ENCODE measurements at regions of chr1 and their contacts with region 1.

Region 1: GRCh38 chr1:181166377-181167196 is 78.1 kb downstream of the IER5 start:
- DNase-seq: peak; percentile 84
- H3K4me3 Mint-ChIP-seq: no peak overlapping the region
- H3K27ac Mint-ChIP-seq: peak overlapping the region; percentile 21
- H3K4me1 Mint-ChIP-seq: peaks cover 7% of the 10 kb centered on the region
- H3K27me3 Mint-ChIP-seq: peaks cover 51% of the 10 kb centered on the region

Region 2: DNA sequence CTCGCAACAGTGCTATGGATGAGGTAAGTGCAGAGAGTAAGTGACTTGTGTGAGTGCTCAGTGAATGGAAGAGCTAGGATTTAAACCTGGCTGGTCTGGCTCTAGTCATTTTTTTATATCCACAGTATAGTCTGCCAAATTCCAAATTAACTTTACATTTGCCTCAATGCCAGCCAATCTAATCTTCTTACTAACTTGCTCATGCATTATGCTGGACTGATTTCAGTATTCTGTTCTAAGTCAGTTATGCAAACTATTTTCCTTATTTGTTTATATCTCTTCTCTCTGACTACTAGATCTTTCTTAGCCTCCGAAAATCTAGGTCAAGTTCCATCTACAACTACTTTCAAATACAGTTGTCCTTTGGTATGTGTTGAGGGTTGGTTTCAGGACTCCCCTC is 401.4 kb before region 1 on chr1:
- CTCF ChIA-PET with region 1: no interaction called
- DNase-seq: no peak
- H3K4me3 Mint-ChIP-seq: no peak overlapping the region
- H3K27ac Mint-ChIP-seq: no peak overlapping the region
- H3K4me1 Mint-ChIP-seq: peaks cover 3% of the 10 kb centered on the region
- H3K27me3 Mint-ChIP-seq: no peaks in the 10 kb centered on the region

Region 3: GRCh38 chr1:180881806-180882509 is 284.6 kb before region 1 on chr1:
- CTCF ChIA-PET with region 1: interaction called, 12 read pairs
- DNase-seq: no peak
- H3K4me3 Mint-ChIP-seq: no peak overlapping the region
- H3K27ac Mint-ChIP-seq: no peak overlapping the region
- H3K4me1 Mint-ChIP-seq: no peaks in the 10 kb centered on the region
- H3K27me3 Mint-ChIP-seq: no peaks in the 10 kb centered on the region

Region 4: GRCh38 chr1:181088079-181089016 is 78.2 kb before region 1 on chr1 and contains the start of gene IER5:
- CTCF ChIA-PET with region 1: interaction called, 18 read pairs
- DNase-seq: peak; percentile 97
- H3K4me3 Mint-ChIP-seq: peak within 1 kb of the TSS; percentile 100
- H3K27ac Mint-ChIP-seq: peak within 1 kb of the TSS; percentile 99
- H3K4me1 Mint-ChIP-seq: peaks cover 52% of the 10 kb centered on the region
- H3K27me3 Mint-ChIP-seq: peaks cover 18% of the 10 kb centered on the region

Region 5: GRCh38 chr1:181152892-181153633 is 13.5 kb before region 1 on chr1:
- CTCF ChIA-PET with region 1: interaction called, 12 read pairs
- DNase-seq: no peak
- H3K4me3 Mint-ChIP-seq: no peak overlapping the region
- H3K27ac Mint-ChIP-seq: no peak overlapping the region
- H3K4me1 Mint-ChIP-seq: peaks cover 44% of the 10 kb centered on the region
- H3K27me3 Mint-ChIP-seq: peaks cover 26% of the 10 kb centered on the region

Measured in activated naive CD4-positive, alpha-beta T cell treated with anti-CD3 and anti-CD28 coated beads, Interleukin-2, amount 10 ng/mL, durations not matched to agents 7 days and 5 days (primary cell).